Activated T-helper 2 cell treated with anti-CD3 and anti-CD28 coated beads, Interferon-gamma antibody, Interleukin-2, Interleukin-4, amounts not matched to agents 10 μg/mL and 5 μg/mL and 100 μg/mL, durations not matched to agents 14 hours and 24 hours and 36 hours (primary cell): ENCODE measurements at regions of chr19 and their contacts with region 1.

Region 1: DNA sequence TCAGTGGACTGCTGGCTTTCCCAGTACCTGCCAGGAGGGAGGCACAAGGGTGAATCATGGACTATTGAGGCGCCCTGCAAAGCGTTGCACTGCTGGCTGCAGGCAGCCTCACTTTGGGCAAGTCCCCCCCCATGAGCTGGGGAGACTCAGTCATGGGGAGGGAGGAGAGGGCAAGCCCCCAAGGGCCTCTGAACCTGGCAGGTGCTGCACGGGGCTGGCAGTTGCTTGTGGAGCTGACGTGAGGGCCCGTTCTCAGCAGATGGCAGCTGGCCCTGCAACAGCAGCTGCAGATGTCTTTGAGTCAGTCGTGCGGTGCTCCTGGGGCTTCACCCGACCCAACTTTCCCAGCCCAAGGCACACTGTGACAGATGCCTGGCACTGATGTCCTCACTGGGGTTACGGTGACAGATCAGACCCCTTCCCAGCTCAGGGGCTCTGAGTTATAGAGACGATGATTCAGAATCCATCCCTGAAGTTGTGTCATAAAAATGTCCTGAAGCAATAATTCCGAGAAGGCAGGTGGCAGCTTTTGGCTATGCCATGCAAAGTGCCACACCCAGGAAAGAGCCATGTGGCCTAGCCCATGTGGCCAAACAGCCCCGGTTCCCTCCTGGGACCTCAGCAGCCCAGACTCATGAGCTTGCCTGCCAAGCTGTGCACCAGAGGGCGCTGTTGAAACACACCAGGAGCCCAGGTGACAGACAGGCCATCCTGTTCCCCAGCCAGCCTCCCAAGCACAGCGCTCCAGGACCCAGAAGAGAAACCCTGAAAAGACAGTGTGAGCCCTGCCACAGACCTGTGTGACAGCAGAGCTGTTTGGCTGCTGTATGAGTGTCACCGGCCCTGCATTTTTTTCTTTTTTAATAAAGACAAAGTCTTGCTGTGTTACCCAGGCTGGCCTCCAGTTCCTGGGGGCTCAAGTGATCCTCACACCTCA is 53.6 kb upstream of the LDLR start:
- DNase-seq: peak; percentile 74
- H3K4me3 Mint-ChIP-seq: no peak overlapping the region
- H3K27ac Mint-ChIP-seq: peak overlapping the region; percentile 40
- H3K4me1 Mint-ChIP-seq: peaks cover 6% of the 10 kb centered on the region
- H3K27me3 Mint-ChIP-seq: no peaks in the 10 kb centered on the region

Region 2: GRCh38 chr19:10797541-10798256 is 238.0 kb before region 1 on chr19:
- intact Hi-C with region 1: no loop called
- DNase-seq: peak; percentile 73
- H3K4me3 Mint-ChIP-seq: peak overlapping the region; percentile 73
- H3K27ac Mint-ChIP-seq: peak overlapping the region; percentile 97
- H3K4me1 Mint-ChIP-seq: peaks cover 17% of the 10 kb centered on the region
- H3K27me3 Mint-ChIP-seq: no peaks in the 10 kb centered on the region

Region 3: GRCh38 chr19:11096210-11096841 is 60.6 kb after region 1 on chr19:
- intact Hi-C with region 1: loop called (anchors 5 kb)
- DNase-seq: peak; percentile 40
- H3K4me3 Mint-ChIP-seq: peak overlapping the region; percentile 69
- H3K27ac Mint-ChIP-seq: peak overlapping the region; percentile 91
- H3K4me1 Mint-ChIP-seq: peaks cover 51% of the 10 kb centered on the region
- H3K27me3 Mint-ChIP-seq: no peaks in the 10 kb centered on the region

Region 4: GRCh38 chr19:11137542-11138384 is 102.1 kb after region 1 on chr19:
- intact Hi-C with region 1: loop called (anchors 10 kb)
- DNase-seq: peak; percentile 29
- H3K4me3 Mint-ChIP-seq: peak overlapping the region; percentile 76
- H3K27ac Mint-ChIP-seq: peak overlapping the region; percentile 69
- H3K4me1 Mint-ChIP-seq: peaks cover 9% of the 10 kb centered on the region
- H3K27me3 Mint-ChIP-seq: no peaks in the 10 kb centered on the region

Region 5: DNA sequence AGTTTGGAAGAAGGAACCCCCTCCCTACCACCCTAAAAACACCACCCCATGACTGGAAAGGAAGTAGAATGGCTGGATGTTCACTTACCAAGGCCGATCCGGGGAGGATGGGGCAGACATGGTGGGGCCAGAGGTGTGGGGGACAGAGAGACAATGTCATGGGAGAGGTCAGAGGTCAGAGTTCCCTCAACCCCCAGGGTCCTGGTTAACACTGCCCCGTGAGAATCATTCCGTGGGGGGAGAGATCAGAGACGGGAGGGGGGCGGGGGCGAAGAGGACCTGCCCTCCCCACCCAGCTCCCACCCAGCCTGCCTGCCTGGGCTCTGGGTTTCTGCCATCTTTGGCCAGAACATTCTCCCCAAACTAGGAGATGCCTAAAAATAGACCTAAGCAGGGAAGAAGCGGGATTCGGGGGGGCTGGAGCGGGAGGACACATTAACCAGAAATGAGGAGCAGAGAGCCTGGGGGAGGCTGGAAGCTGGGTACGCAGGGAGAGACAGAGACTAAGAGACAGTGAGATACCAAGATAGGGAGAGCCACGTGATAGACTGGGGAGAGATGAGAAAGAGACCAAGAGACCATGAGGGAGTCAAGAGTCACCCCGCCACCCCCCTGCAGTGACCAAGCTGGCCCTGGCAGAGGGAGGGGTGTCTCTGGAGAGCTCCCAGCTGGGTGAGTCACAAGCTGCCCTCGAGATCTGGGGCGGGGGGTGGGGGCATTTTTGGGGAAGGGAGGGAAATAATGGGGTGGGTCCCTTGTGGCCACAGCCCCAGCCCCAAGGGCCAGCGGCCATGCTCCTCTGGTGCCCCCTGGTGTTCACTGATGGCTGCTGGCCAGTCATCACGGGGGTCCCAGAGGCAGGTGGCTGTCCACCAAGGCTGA is 167.7 kb after region 1 on chr19:
- intact Hi-C with region 1: loop called (anchors 5 kb)
- DNase-seq: no peak
- H3K4me3 Mint-ChIP-seq: no peak overlapping the region
- H3K27ac Mint-ChIP-seq: no peak overlapping the region
- H3K4me1 Mint-ChIP-seq: peaks cover 2% of the 10 kb centered on the region
- H3K27me3 Mint-ChIP-seq: peaks cover 2% of the 10 kb centered on the region

Region 6: GRCh38 chr19:11242864-11243797 is 207.4 kb after region 1 on chr19:
- intact Hi-C with region 1: no loop called
- DNase-seq: peak; percentile 64
- H3K4me3 Mint-ChIP-seq: no peak overlapping the region
- H3K27ac Mint-ChIP-seq: no peak overlapping the region
- H3K4me1 Mint-ChIP-seq: no peaks in the 10 kb centered on the region
- H3K27me3 Mint-ChIP-seq: peaks cover 1% of the 10 kb centered on the region